Activated B cell treated with CpG ODN at 0.5 μM for 24 hours (primary cell): ENCODE measurements at regions of chr15 and their contacts with region 1.

Region 1: GRCh38 chr15:101258238-101259144 is 6.6 kb upstream of the CHSY1 start:
- DNase-seq: no peak
- ATAC-seq: peak; percentile 77
- H3K4me3 Mint-ChIP-seq: no peak overlapping the region
- H3K27ac Mint-ChIP-seq: no peak overlapping the region
- H3K4me1 Mint-ChIP-seq: peaks cover 4% of the 10 kb centered on the region
- H3K27me3 Mint-ChIP-seq: peaks cover 7% of the 10 kb centered on the region
- CTCF ChIP-seq: peak; percentile 46

Region 2: DNA sequence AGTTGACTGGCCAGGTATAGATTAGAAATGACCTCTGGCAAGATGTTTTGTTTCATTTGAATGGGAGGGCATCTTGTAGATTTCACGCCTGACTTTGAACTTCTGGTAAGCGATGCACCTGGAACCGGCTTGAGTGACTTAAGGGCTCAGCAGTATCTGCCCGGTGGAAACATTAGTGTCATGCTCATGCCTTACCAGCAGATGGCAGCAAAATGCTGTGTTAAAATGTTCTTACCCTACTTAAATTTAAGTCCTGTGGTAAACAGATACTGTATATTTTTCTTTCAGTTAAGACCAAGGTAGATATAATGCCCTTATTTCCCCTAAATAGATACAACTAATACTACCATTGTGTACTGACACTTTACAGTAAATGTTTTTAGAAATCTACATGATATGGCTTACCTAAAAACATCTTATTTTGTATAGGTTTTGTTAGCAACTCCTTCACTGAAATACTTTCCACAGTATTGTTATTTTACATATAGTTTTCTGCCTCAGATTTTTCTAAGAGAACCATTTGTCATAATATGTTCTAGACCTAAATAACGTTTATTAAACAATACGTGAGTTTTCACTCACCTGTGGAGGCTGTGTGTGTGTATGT is 630.6 kb before region 1 on chr15:
- CTCF ChIA-PET with region 1: no interaction called
- POLR2A ChIA-PET with region 1: no interaction called
- intact Hi-C with region 1: loop called (anchors 1 kb)
- DNase-seq: no peak
- ATAC-seq: peak; percentile 79
- H3K4me3 Mint-ChIP-seq: no peak overlapping the region
- H3K27ac Mint-ChIP-seq: no peak overlapping the region
- H3K4me1 Mint-ChIP-seq: peaks cover 4% of the 10 kb centered on the region
- H3K27me3 Mint-ChIP-seq: no peaks in the 10 kb centered on the region
- CTCF ChIP-seq: peak; percentile 84

Region 3: GRCh38 chr15:101014921-101015841 is 243.3 kb before region 1 on chr15:
- CTCF ChIA-PET with region 1: interaction called, 48 read pairs
- POLR2A ChIA-PET with region 1: interaction called, 3 read pairs
- intact Hi-C with region 1: loop called (anchors 1 kb)
- DNase-seq: peak; percentile 49
- ATAC-seq: peak; percentile 57
- H3K4me3 Mint-ChIP-seq: no peak overlapping the region
- H3K27ac Mint-ChIP-seq: no peak overlapping the region
- H3K4me1 Mint-ChIP-seq: no peaks in the 10 kb centered on the region
- H3K27me3 Mint-ChIP-seq: no peaks in the 10 kb centered on the region
- CTCF ChIP-seq: peak; percentile 56

Region 4: GRCh38 chr15:101088788-101089583 is 169.5 kb before region 1 on chr15:
- CTCF ChIA-PET with region 1: interaction called, 65 read pairs
- POLR2A ChIA-PET with region 1: interaction called, 4 read pairs
- intact Hi-C with region 1: loop called (anchors 1 kb)
- DNase-seq: peak; percentile 86
- ATAC-seq: peak; percentile 98
- H3K4me3 Mint-ChIP-seq: no peak overlapping the region
- H3K27ac Mint-ChIP-seq: no peak overlapping the region
- H3K4me1 Mint-ChIP-seq: no peaks in the 10 kb centered on the region
- H3K27me3 Mint-ChIP-seq: no peaks in the 10 kb centered on the region
- CTCF ChIP-seq: peak; percentile 52

Region 5: GRCh38 chr15:101121511-101122090 is 136.9 kb before region 1 on chr15:
- CTCF ChIA-PET with region 1: interaction called, 19 read pairs
- POLR2A ChIA-PET with region 1: no interaction called
- intact Hi-C with region 1: no loop called
- DNase-seq: peak; percentile 34
- ATAC-seq: peak; percentile 80
- H3K4me3 Mint-ChIP-seq: peak overlapping the region; percentile 19
- H3K27ac Mint-ChIP-seq: peak overlapping the region; percentile 61
- H3K4me1 Mint-ChIP-seq: peaks cover 37% of the 10 kb centered on the region
- H3K27me3 Mint-ChIP-seq: no peaks in the 10 kb centered on the region
- CTCF ChIP-seq: no peak

Region 6: DNA sequence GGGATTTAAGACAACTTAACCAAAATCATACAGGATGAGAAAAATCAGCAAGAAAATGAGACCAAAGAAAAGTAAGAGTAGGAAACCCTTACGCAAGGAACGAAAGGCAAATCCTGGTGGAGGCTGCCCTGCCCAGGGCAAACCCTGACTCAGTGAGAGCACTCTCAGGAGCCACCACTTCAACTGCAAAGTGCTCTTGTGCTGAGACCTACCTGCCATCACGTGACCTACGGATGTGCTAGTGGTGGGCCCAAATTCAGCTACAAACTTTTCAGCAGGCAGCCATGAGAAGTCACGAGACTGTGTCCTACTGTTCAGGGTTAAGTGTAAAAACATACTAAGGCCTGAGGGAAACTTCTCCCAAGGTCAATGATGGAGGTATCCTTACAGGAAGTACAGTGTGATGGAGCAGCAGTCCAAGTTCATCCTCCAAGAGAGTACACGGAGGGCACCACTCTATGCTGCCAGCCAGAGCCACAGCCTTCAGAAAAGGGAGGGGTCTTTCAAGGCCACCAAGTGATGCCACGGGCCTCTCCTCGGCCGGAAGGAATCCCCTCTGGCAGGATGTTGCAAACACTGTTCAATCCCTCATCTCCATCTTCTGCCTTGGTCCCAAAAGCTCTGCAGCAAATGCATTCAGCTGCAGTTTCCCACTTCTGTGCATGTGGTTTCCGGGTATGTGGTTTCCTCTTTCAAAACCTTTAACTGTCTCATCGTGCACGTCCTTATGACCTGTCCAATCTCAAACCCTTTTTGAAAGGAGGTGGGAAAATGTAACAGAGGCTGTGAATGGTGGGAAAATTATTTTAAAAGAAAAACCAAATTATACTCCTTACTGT is 16.1 kb before region 1 on chr15:
- CTCF ChIA-PET with region 1: interaction called, 18 read pairs
- POLR2A ChIA-PET with region 1: no interaction called
- intact Hi-C with region 1: no loop called
- DNase-seq: peak; percentile 24
- ATAC-seq: peak; percentile 85
- H3K4me3 Mint-ChIP-seq: peak overlapping the region; percentile 46
- H3K27ac Mint-ChIP-seq: peak overlapping the region; percentile 65
- H3K4me1 Mint-ChIP-seq: peaks cover 80% of the 10 kb centered on the region
- H3K27me3 Mint-ChIP-seq: no peaks in the 10 kb centered on the region
- CTCF ChIP-seq: no peak